ENCODE measurements at regions of chrX and their contacts with region 1.

Region 1: GRCh38 chrX:16870095-16870860 is at the start of gene RBBP7:
- DNase-seq: peak; percentile 93
- H3K4me3 Mint-ChIP-seq: peak within 1 kb of the TSS; percentile 97
- H3K27ac Mint-ChIP-seq: peak within 1 kb of the TSS; percentile 98
- H3K4me1 Mint-ChIP-seq: peaks cover 26% of the 10 kb centered on the region
- H3K27me3 Mint-ChIP-seq: no peaks in the 10 kb centered on the region
- total RNA-seq, gene RBBP7: 213 to 216 TPM

Region 2: GRCh38 chrX:16610121-16610621 is 260.1 kb before region 1 on chrX:
- CTCF ChIA-PET with region 1: no interaction called
- POLR2A ChIA-PET with region 1: no interaction called
- intact Hi-C with region 1: no loop called
- DNase-seq: no peak
- H3K4me3 Mint-ChIP-seq: no peak overlapping the region
- H3K27ac Mint-ChIP-seq: no peak overlapping the region
- H3K4me1 Mint-ChIP-seq: peaks cover 14% of the 10 kb centered on the region
- H3K27me3 Mint-ChIP-seq: no peaks in the 10 kb centered on the region

Region 3: GRCh38 chrX:16771483-16772398 is 98.5 kb before region 1 on chrX:
- CTCF ChIA-PET with region 1: no interaction called
- POLR2A ChIA-PET with region 1: no interaction called
- intact Hi-C with region 1: no loop called
- DNase-seq: no peak
- H3K4me3 Mint-ChIP-seq: no peak overlapping the region
- H3K27ac Mint-ChIP-seq: no peak overlapping the region
- H3K4me1 Mint-ChIP-seq: no peaks in the 10 kb centered on the region
- H3K27me3 Mint-ChIP-seq: no peaks in the 10 kb centered on the region

Region 4: GRCh38 chrX:16786139-16786790 is 84.0 kb before region 1 on chrX and contains the start of gene TXLNG:
- CTCF ChIA-PET with region 1: no interaction called
- POLR2A ChIA-PET with region 1: interaction called, 3 read pairs
- intact Hi-C with region 1: loop called (anchors 1 kb)
- DNase-seq: peak; percentile 96
- H3K4me3 Mint-ChIP-seq: peak within 1 kb of the TSS; percentile 86
- H3K27ac Mint-ChIP-seq: peak within 1 kb of the TSS; percentile 77
- H3K4me1 Mint-ChIP-seq: peaks cover 10% of the 10 kb centered on the region
- H3K27me3 Mint-ChIP-seq: no peaks in the 10 kb centered on the region
- total RNA-seq, gene TXLNG: 14.2 to 15.1 TPM

Region 5: GRCh38 chrX:16855363-16856075 is 14.8 kb before region 1 on chrX:
- CTCF ChIA-PET with region 1: no interaction called
- POLR2A ChIA-PET with region 1: interaction called, 3 read pairs
- intact Hi-C with region 1: loop called (anchors 1 kb)
- DNase-seq: no peak
- H3K4me3 Mint-ChIP-seq: no peak overlapping the region
- H3K27ac Mint-ChIP-seq: peak overlapping the region; percentile 79
- H3K4me1 Mint-ChIP-seq: peaks cover 70% of the 10 kb centered on the region
- H3K27me3 Mint-ChIP-seq: no peaks in the 10 kb centered on the region

Region 6: DNA sequence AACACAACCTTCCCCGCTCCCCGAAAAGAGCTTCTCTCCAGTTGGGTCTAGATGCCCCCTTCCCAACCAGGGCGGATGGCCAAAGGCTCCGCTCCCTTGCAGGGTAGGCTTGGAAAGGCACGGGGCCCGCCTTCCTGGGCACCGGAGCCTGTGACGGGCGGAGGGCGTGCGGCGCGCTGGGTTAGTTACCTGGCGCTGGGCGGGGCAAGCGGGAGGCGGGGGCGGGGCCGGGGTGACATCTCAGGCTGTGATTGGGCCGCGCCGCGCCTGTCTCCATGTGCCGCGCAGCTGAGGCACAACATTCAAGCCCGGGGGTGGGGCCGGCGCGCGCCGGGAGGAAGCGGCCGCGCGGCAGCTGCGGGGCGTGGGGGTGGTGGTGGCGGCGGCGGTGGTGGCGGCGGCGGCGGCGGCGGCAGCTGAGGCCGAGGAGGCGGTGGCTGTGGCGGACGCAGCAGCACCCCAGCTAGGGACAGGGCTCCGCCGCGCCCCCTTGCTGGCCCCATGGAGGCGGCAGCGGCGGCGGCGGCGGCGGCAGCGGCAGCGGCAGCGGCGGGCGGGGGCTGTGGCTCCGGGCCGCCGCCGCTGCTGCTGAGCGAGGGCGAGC is 76.2 kb after region 1 on chrX and contains the start of gene REPS2:
- CTCF ChIA-PET with region 1: no interaction called
- POLR2A ChIA-PET with region 1: no interaction called
- intact Hi-C with region 1: loop called (anchors 2 kb)
- DNase-seq: peak; percentile 85
- H3K4me3 Mint-ChIP-seq: peak within 1 kb of the TSS; percentile 69
- H3K27ac Mint-ChIP-seq: no peak within 1 kb of the TSS
- H3K4me1 Mint-ChIP-seq: no peaks in the 10 kb centered on the region
- H3K27me3 Mint-ChIP-seq: no peaks in the 10 kb centered on the region
- total RNA-seq, gene REPS2: not detected

Region 7: DNA sequence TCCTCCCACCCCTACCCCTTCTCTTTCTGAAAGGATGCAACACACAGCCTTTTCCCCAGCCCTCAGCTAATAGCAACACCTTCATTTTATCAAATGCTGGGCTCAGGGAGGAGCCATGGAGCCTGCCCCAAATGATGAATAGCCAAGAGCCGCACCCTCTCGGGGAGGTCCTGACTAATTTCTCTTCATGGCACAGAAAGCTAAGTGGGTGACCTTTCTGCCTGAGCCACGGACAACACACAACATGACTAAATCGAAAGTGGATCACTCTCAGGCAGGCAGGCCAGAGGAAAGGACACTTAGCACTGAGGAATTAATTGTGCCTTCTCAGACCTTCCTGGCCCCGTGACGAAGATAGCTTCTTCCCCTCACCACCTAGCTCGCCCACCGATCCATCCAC is 1155.9 kb after region 1 on chrX:
- CTCF ChIA-PET with region 1: no interaction called
- POLR2A ChIA-PET with region 1: no interaction called
- intact Hi-C with region 1: no loop called
- DNase-seq: no peak
- H3K4me3 Mint-ChIP-seq: no peak overlapping the region
- H3K27ac Mint-ChIP-seq: no peak overlapping the region
- H3K4me1 Mint-ChIP-seq: no peaks in the 10 kb centered on the region
- H3K27me3 Mint-ChIP-seq: no peaks in the 10 kb centered on the region

Region 8: GRCh38 chrX:18425199-18426003 is 1555.1 kb after region 1 on chrX and contains the start of gene CDKL5:
- CTCF ChIA-PET with region 1: no interaction called
- POLR2A ChIA-PET with region 1: no interaction called
- intact Hi-C with region 1: loop called (anchors 10 kb)
- DNase-seq: peak; percentile 97
- H3K4me3 Mint-ChIP-seq: peak within 1 kb of the TSS; percentile 77
- H3K27ac Mint-ChIP-seq: no peak within 1 kb of the TSS
- H3K4me1 Mint-ChIP-seq: peaks cover 9% of the 10 kb centered on the region
- H3K27me3 Mint-ChIP-seq: peaks cover 3% of the 10 kb centered on the region
- total RNA-seq, gene CDKL5: 1.2 to 1.4 TPM

Measured in activated CD4-positive, alpha-beta memory T cell treated with anti-CD3 and anti-CD28 coated beads for 36 hours (primary cell).